ENCODE measurements at regions of chr15 and their contacts with region 1.

Region 1: GRCh38 chr15:85582131-85583079 is 202.0 kb downstream of the AKAP13 start:
- DNase-seq: no peak
- ATAC-seq: peak; percentile 59
- H3K4me3 Mint-ChIP-seq: peak overlapping the region; percentile 83
- H3K27ac Mint-ChIP-seq: peak overlapping the region; percentile 90
- H3K4me1 Mint-ChIP-seq: peaks cover 76% of the 10 kb centered on the region
- H3K27me3 Mint-ChIP-seq: no peaks in the 10 kb centered on the region
- CTCF ChIP-seq: no peak

Region 2: GRCh38 chr15:85312486-85312885 is 269.9 kb before region 1 on chr15:
- CTCF ChIA-PET with region 1: no interaction called
- POLR2A ChIA-PET with region 1: interaction called, 9 read pairs
- intact Hi-C with region 1: loop called (anchors 5 kb)
- DNase-seq: peak; percentile 53
- ATAC-seq: peak; percentile 89
- H3K4me3 Mint-ChIP-seq: peak overlapping the region; percentile 87
- H3K27ac Mint-ChIP-seq: peak overlapping the region; percentile 99
- H3K4me1 Mint-ChIP-seq: peaks cover 96% of the 10 kb centered on the region
- H3K27me3 Mint-ChIP-seq: no peaks in the 10 kb centered on the region
- CTCF ChIP-seq: no peak

Region 3: DNA sequence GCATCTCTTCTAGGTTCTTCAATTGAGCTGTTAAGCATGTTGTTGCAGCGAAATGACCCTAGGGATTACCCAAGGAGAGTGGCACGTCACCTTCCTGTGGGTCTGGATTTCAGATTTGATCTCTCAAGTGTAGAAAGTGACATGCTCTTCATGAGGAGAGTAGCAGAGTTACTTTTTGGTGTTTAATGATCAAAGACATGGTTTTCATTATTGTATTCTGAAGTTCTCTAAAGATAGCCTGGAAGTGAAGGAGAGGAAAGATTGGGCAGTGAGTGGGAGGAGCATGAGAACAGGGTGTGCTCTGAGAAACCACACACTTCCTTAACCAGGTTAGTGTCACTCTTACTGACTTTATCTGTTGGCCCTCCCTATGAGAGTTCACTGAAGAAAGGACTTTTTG is 48.4 kb before region 1 on chr15:
- CTCF ChIA-PET with region 1: no interaction called
- POLR2A ChIA-PET with region 1: interaction called, 5 read pairs
- intact Hi-C with region 1: loop called (anchors 1 kb)
- DNase-seq: no peak
- ATAC-seq: peak; percentile 77
- H3K4me3 Mint-ChIP-seq: peak overlapping the region; percentile 63
- H3K27ac Mint-ChIP-seq: peak overlapping the region; percentile 87
- H3K4me1 Mint-ChIP-seq: peaks cover 84% of the 10 kb centered on the region
- H3K27me3 Mint-ChIP-seq: no peaks in the 10 kb centered on the region
- CTCF ChIP-seq: no peak

Region 4: GRCh38 chr15:85554852-85555521 is 27.4 kb before region 1 on chr15:
- CTCF ChIA-PET with region 1: interaction called, 3 read pairs
- POLR2A ChIA-PET with region 1: interaction called, 11 read pairs
- intact Hi-C with region 1: loop called (anchors 1 kb)
- DNase-seq: no peak
- ATAC-seq: peak; percentile 78
- H3K4me3 Mint-ChIP-seq: peak overlapping the region; percentile 42
- H3K27ac Mint-ChIP-seq: peak overlapping the region; percentile 62
- H3K4me1 Mint-ChIP-seq: peaks cover 40% of the 10 kb centered on the region
- H3K27me3 Mint-ChIP-seq: no peaks in the 10 kb centered on the region
- CTCF ChIP-seq: no peak

Region 5: DNA sequence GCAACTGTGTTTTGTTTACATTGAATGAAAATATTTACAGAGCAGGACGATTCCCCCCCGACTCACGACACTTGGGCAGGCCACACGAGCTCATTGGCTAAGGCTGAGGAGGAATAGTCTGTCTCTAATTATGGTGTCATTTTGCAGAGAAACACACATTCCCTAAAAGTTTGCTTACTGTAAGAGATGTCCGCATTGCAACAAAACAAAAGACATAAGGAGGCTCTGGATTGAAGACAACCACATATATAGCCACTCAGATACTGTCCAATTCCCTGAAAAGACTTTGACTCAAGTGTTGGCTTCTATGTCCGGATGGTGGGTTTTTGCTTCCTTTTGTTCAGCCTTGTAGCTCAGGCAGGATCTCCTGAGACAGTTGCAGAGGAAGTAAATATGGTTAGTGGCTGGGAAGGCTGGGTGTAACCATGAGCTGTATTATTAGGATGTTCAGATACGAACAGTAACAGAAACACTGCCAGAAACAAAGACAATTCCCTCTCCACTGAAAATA is 41.9 kb after region 1 on chr15:
- CTCF ChIA-PET with region 1: interaction called, 6 read pairs
- POLR2A ChIA-PET with region 1: no interaction called
- intact Hi-C with region 1: loop called (anchors 5 kb)
- DNase-seq: no peak
- ATAC-seq: no peak
- H3K4me3 Mint-ChIP-seq: peak overlapping the region; percentile 36
- H3K27ac Mint-ChIP-seq: peak overlapping the region; percentile 1
- H3K4me1 Mint-ChIP-seq: peaks cover 55% of the 10 kb centered on the region
- H3K27me3 Mint-ChIP-seq: no peaks in the 10 kb centered on the region
- CTCF ChIP-seq: no peak